IMR-90 (cell line): ENCODE measurements at regions of chr14 and their contacts with region 1.

Region 1: GRCh38 chr14:64705381-64706118 is 1.3 kb downstream of the PLEKHG3 start:
- DNase-seq: no peak
- ATAC-seq: no peak
- H3K4me3 ChIP-seq: peak overlapping the region; percentile 82; the same call in 1 of the 2 replicates
- H3K27ac ChIP-seq: no peak overlapping the region
- H3K4me1 ChIP-seq: peaks cover 13% of the 10 kb centered on the region; the same call in 1 of the 2 replicates
- H3K27me3 ChIP-seq: peaks cover 30% of the 10 kb centered on the region
- CTCF ChIP-seq: no peak
- POLR2A ChIP-seq: no peak
- RAD21 ChIP-seq: no peak

Region 2: GRCh38 chr14:64681796-64682710 is 23.5 kb before region 1 on chr14:
- CTCF ChIA-PET with region 1: no interaction called
- POLR2A ChIA-PET with region 1: no interaction called
- dilution Hi-C with region 1: no loop called
- in situ Hi-C with region 1: no loop called
- intact Hi-C with region 1: no loop called
- DNase-seq: peak; percentile 38
- ATAC-seq: peak; percentile 80
- H3K4me3 ChIP-seq: no peak overlapping the region
- H3K27ac ChIP-seq: no peak overlapping the region
- H3K4me1 ChIP-seq: peaks cover 11% of the 10 kb centered on the region; the same call in 1 of the 2 replicates
- H3K27me3 ChIP-seq: peaks cover 4% of the 10 kb centered on the region; the same call in 1 of the 2 replicates
- CTCF ChIP-seq: no peak
- POLR2A ChIP-seq: no peak
- RAD21 ChIP-seq: no peak

Region 3: DNA sequence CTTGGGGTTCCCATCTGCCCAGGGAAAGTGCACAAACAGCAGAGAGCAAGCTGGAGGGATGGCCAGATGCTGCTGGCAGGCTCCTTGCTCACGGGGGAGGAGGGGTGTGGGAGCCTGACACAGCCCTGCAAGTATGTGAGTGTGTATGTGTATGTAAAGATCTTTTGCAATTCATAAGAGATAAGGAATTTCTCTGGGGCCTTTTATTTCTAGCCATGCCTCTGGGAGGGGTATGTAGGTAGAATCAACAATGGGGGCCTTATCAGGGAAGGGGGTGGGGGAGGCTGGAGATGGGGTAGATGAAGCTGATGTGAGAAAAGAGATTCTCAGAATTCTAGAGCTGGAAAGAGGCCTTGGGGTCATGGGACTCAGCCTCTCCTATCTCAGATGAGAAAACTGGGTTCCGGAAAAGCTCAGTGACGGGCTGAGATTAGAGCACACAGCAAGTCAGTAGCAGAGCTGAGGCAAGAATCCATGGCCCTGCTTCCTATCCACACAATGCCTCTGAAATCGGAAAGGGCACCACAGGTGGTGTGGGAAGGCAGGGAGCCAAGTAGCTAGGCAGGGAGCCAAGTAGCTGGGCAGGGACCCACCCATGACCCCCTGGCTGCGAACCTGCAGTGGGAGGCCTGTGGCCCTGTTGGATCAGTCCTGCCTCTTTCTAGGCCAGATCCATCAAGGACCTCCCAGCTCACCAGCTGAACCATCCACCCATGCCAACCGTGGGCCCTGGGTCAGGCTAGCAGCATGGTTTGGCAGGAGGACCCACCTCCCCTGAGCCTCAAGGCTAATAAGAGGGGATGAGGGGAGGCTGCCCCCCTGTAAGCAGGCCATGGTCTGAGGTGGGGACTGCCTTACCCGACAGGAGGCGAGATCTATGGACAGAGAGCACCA is 53.4 kb after region 1 on chr14:
- CTCF ChIA-PET with region 1: no interaction called
- POLR2A ChIA-PET with region 1: no interaction called
- dilution Hi-C with region 1: no loop called
- in situ Hi-C with region 1: no loop called
- intact Hi-C with region 1: loop called (anchors 2 kb)
- DNase-seq: peak; percentile 97
- ATAC-seq: peak; percentile 88
- H3K4me3 ChIP-seq: no peak overlapping the region
- H3K27ac ChIP-seq: peak overlapping the region; percentile 92
- H3K4me1 ChIP-seq: peaks cover 45% of the 10 kb centered on the region
- H3K27me3 ChIP-seq: peaks cover 6% of the 10 kb centered on the region; the same call in 1 of the 2 replicates
- CTCF ChIP-seq: no peak
- POLR2A ChIP-seq: no peak
- RAD21 ChIP-seq: no peak; the same call in 1 of the 2 replicates